ENCODE measurements at regions of chr15 and their contacts with region 1.

Region 1: GRCh38 chr15:42608110-42608531 is 32.7 kb downstream of the STARD9 start:
- DNase-seq: no peak

Region 2: GRCh38 chr15:42591238-42591934 is 16.7 kb before region 1 on chr15:
- intact Hi-C with region 1: no loop called
- DNase-seq: no peak

Region 3: DNA sequence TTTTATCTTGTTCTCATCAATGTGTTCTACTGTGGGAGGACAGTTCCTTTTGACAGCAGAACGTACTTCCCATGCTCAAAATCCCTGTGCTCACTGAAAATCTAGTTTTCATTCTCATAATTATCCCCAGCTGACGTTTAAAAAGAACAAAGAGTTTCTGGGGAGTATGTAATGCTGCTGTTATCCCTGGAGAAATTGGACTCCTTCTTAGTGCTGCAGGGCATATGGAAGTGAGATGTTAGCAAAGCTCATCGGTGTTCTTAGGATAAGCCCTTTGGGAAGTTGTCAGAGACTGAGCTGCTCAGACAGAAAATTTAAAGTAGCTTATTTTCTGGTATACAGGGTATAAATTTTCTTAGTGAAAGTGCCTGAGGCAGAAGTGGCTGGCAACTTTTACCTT is 62.3 kb after region 1 on chr15:
- intact Hi-C with region 1: no loop called
- DNase-seq: no peak

Region 4: DNA sequence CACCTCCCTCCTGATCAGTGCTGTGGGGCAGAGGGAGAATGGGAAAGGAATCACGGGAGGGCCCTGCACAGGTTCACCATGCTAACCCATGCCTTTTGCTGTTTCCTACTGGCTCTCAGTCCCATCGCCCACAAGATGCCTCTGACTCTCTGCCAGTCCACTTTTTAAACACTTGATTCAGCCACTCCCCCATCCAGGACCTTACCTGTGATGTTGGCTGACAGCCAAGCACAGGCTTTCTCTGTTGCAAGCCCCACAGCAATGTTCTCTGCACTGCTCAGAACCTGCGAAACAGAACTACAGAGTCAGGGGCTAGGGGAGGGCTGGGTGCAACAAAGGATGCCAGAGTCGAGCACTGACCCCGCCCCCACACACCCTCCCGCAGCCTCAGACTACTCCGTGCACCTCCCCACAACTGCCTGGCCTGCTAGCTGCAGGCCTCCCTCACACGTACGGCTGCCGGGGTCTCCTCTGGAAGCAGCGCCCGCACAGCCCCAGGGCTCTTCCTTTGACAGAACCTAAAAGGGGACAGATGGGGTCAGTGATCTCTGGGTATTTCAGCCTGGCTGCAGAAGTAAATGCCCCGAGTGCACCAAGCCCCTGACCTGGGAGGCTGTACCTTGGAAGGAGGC is 119.7 kb after region 1 on chr15:
- intact Hi-C with region 1: loop called in 1 of 2 experiments (anchors 2 kb)
- DNase-seq: no peak

Region 5: GRCh38 chr15:42994546-42994945 is 386.4 kb after region 1 on chr15:
- intact Hi-C with region 1: no loop called
- DNase-seq: no peak

Region 6: DNA sequence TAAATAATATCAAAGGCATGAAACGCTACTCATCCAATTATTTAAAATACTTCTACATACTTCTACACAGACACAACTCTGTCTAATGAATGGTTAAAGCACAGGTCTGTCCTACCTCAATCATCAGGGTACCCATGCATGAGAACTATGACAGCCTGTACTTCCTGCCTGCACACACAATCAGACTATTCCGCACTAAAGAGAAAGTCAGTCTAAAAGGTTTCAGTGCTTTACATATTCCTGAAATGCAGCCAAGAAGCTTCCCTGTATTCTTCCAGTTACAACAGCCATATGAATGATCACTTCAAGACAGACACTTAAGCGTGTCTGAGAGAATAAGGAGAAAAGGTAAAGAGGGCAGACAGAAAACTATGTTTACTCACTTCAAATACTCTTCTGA is 821.6 kb after region 1 on chr15:
- intact Hi-C with region 1: no loop called
- DNase-seq: no peak

Measured in posterior vena cava (tissue), 2 donors.